Gastrocnemius medialis (tissue), 4 donors: ENCODE measurements at regions of chr19 and their contacts with region 1.

Region 1: DNA sequence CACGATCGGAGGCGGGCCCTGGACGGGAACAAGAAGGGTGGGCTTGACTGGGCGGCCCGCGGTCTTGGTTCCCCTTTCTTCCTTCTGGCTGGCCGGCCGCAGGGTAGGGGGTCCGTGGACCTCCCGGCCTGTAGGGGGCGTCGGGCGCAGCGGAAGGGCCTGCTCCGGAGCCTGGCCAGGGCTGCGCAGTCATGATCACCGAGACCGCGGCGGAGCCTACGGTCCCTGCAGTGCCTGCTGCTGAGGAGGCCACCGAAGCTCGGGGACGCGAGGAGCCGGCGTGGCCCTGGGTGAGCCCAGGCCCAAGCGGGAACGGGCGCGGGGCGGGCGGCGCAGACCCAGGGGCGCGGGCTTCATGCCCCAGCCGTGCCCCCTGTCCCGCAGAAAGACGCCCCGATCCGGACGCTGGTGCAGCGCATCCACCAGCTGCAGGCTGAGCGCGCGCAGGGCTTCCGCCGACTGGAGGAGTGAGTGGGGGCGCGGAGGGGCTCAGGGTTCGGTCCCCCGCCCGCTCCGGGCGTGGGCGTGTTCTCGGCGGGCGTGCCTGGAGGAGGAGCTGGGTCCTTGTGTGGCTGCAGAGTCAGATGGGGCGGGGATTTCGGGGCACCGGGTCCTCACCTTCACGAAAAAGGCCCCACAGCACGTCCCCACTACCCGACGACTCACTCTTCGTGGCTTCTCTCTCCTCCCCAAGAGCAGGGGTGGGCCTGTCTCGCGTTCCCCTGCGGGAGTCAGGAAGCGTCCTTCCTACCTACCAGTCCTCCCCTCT is at the start of gene REX1BD:
- DNase-seq: peak; percentile 55 to 76
- ATAC-seq: peak; percentile 81
- H3K4me3 ChIP-seq: peak within 1 kb of the TSS; percentile 67 to 100 (median 88)
- H3K27ac ChIP-seq: peak within 1 kb of the TSS; percentile 84 to 96 (median 94)
- H3K4me1 ChIP-seq: peaks cover 17 to 19% of the 10 kb centered on the region in 2 donors
- H3K27me3 ChIP-seq: no peaks in the 10 kb centered on the region
- CTCF ChIP-seq: peak; percentile 85 to 94 (median 89)
- POLR2A ChIP-seq: peak; percentile 34 to 52
- total RNA-seq, gene REX1BD: 163 to 337 (median 187) TPM

Region 2: DNA sequence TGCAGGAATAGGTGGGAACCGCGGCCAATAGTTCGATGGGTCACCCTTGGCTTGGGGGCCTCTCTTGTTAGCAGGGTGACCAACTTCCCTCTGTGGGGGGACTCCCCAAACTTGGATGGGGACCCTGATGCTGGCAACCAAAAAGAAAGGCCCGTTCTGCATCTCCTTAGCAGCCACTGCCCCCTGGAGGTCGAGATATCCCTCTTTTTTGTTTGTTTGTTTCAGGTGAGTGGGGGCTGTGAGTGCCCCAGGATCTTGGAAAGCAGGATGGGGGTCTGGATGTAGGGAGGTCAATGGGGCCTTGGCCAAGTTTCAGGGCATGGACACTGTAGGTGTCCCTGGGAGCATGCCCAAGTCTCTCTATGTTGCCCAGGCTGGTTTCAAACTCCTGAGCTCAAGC is 87.0 kb after region 1 on chr19:
- in situ Hi-C with region 1: loop called in 1 of 4 experiments (anchors 10 kb)
- intact Hi-C with region 1: loop called (anchors 2 kb)
- DNase-seq: no peak
- ATAC-seq: no peak
- H3K4me3 ChIP-seq: no peak overlapping the region
- H3K27ac ChIP-seq: no peak overlapping the region
- H3K4me1 ChIP-seq: peaks cover 29 to 57% of the 10 kb centered on the region in 2 donors
- H3K27me3 ChIP-seq: no peaks in the 10 kb centered on the region
- CTCF ChIP-seq: peak in 4 of 5 experiments; percentile 13 to 55 (median 25)
- POLR2A ChIP-seq: no peak

Region 3: GRCh38 chr19:18831524-18832305 is 242.9 kb after region 1 on chr19 and contains the start of gene UPF1:
- in situ Hi-C with region 1: loop called in 1 of 4 experiments (anchors 25 kb)
- intact Hi-C with region 1: loop called (anchors 5 kb)
- DNase-seq: peak; percentile 86 to 87
- ATAC-seq: peak; percentile 91 to 95
- H3K4me3 ChIP-seq: peak within 1 kb of the TSS; percentile 78 to 96 (median 83)
- H3K27ac ChIP-seq: peak within 1 kb of the TSS; percentile 77 to 94 (median 86)
- H3K4me1 ChIP-seq: peaks cover 28 to 38% of the 10 kb centered on the region in 2 donors
- H3K27me3 ChIP-seq: peaks cover 0 to 6% (median 0%) of the 10 kb centered on the region in 3 donors
- CTCF ChIP-seq: peak in 3 of 5 experiments; percentile 20 to 49 (median 23)
- POLR2A ChIP-seq: peak; percentile 78 to 90
- total RNA-seq, gene UPF1: 26.0 to 64.9 (median 46.4) TPM

Region 4: GRCh38 chr19:18856385-18857126 is 267.8 kb after region 1 on chr19:
- in situ Hi-C with region 1: loop called in 1 of 4 experiments (anchors 10 kb)
- intact Hi-C with region 1: no loop called
- DNase-seq: no peak
- ATAC-seq: peak in 1 of 2 donors; percentile 12
- H3K4me3 ChIP-seq: no peak overlapping the region
- H3K27ac ChIP-seq: no peak overlapping the region
- H3K4me1 ChIP-seq: peaks cover 0 to 14% of the 10 kb centered on the region in 2 donors
- H3K27me3 ChIP-seq: no peaks in the 10 kb centered on the region
- CTCF ChIP-seq: no peak
- POLR2A ChIP-seq: no peak